ENCODE measurements at regions of chr13 and their contacts with region 1.

Region 1: GRCh38 chr13:32538621-32539246 is at the start of gene N4BP2L2:
- DNase-seq: peak; percentile 94
- ATAC-seq: peak; percentile 96
- H3K4me3 Mint-ChIP-seq: peak within 1 kb of the TSS; percentile 93
- H3K27ac Mint-ChIP-seq: peak within 1 kb of the TSS; percentile 98
- H3K4me1 Mint-ChIP-seq: peaks cover 39% of the 10 kb centered on the region
- H3K27me3 Mint-ChIP-seq: peaks cover 4% of the 10 kb centered on the region
- total RNA-seq, gene N4BP2L2: 95.1 to 105 TPM

Region 2: GRCh38 chr13:31199849-31200636 is 1338.7 kb before region 1 on chr13 and contains the start of gene B3GLCT:
- CTCF ChIA-PET with region 1: no interaction called
- POLR2A ChIA-PET with region 1: no interaction called
- intact Hi-C with region 1: loop called in 1 of 2 experiments (anchors 10 kb)
- DNase-seq: peak; percentile 87
- ATAC-seq: peak; percentile 81
- H3K4me3 Mint-ChIP-seq: peak within 1 kb of the TSS; percentile 71
- H3K27ac Mint-ChIP-seq: peak within 1 kb of the TSS; percentile 58
- H3K4me1 Mint-ChIP-seq: peaks cover 34% of the 10 kb centered on the region
- H3K27me3 Mint-ChIP-seq: no peaks in the 10 kb centered on the region
- total RNA-seq, gene B3GLCT: 2.1 to 2.4 TPM

Region 3: DNA sequence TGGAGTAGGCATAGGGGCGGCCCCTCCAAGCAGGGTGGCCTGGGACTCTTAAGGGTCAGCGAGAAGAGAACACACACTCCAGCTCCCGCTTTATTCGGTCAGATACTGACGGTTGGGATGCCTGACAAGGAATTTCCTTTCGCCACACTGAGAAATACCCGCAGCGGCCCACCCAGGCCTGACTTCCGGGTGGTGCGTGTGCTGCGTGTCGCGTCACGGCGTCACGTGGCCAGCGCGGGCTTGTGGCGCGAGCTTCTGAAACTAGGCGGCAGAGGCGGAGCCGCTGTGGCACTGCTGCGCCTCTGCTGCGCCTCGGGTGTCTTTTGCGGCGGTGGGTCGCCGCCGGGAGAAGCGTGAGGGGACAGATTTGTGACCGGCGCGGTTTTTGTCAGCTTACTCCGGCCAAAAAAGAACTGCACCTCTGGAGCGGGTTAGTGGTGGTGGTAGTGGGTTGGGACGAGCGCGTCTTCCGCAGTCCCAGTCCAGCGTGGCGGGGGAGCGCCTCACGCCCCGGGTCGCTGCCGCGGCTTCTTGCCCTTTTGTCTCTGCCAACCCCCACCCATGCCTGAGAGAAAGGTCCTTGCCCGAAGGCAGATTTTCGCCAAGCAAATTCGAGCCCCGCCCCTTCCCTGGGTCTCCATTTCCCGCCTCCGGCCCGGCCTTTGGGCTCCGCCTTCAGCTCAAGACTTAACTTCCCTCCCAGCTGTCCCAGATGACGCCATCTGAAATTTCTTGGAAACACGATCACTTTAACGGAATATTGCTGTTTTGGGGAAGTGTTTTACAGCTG is 223.3 kb before region 1 on chr13 and contains the starts of genes BRCA2 and ZAR1L:
- CTCF ChIA-PET with region 1: no interaction called
- POLR2A ChIA-PET with region 1: interaction called, 5 read pairs
- intact Hi-C with region 1: loop called (anchors 1 to 2 kb)
- DNase-seq: peak; percentile 94
- ATAC-seq: peak; percentile 95
- H3K4me3 Mint-ChIP-seq: peak within 1 kb of the TSS; percentile 92
- H3K27ac Mint-ChIP-seq: peak within 1 kb of the TSS; percentile 100
- H3K4me1 Mint-ChIP-seq: peaks cover 9% of the 10 kb centered on the region
- H3K27me3 Mint-ChIP-seq: no peaks in the 10 kb centered on the region
- total RNA-seq, gene BRCA2: 34.1 to 49.0 TPM
- total RNA-seq, gene ZAR1L: not detected

Region 4: DNA sequence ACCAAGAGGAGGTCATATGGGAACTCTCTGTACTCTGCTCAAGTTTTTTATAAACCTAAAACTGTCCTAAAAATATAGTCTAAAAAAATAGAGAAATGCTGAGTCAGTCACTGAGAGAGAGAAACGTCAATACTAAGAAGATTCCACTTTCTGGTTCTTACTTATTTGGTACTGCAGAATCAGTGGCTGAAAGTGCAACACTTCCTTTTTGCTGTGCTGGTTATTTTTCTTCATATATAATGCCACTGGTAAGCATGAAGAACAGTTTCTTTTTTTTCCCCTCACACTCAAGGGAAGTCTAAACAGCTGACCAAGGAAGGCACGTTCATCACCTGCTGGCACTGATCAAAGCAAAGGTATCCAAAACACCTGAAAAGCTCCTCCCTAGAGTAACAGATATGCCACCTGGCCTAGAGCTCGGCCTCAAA is 66.5 kb before region 1 on chr13:
- CTCF ChIA-PET with region 1: no interaction called
- POLR2A ChIA-PET with region 1: interaction called, 5 read pairs
- intact Hi-C with region 1: loop called in 1 of 2 experiments (anchors 5 kb)
- DNase-seq: no peak
- ATAC-seq: peak; percentile 70
- H3K4me3 Mint-ChIP-seq: no peak overlapping the region
- H3K27ac Mint-ChIP-seq: no peak overlapping the region
- H3K4me1 Mint-ChIP-seq: peaks cover 8% of the 10 kb centered on the region
- H3K27me3 Mint-ChIP-seq: no peaks in the 10 kb centered on the region

Region 5: GRCh38 chr13:32639502-32640105 is 100.9 kb after region 1 on chr13:
- CTCF ChIA-PET with region 1: no interaction called
- POLR2A ChIA-PET with region 1: no interaction called
- intact Hi-C with region 1: loop called in 1 of 2 experiments (anchors 2 kb)
- DNase-seq: peak; percentile 66
- ATAC-seq: peak; percentile 69
- H3K4me3 Mint-ChIP-seq: no peak overlapping the region
- H3K27ac Mint-ChIP-seq: no peak overlapping the region
- H3K4me1 Mint-ChIP-seq: peaks cover 40% of the 10 kb centered on the region
- H3K27me3 Mint-ChIP-seq: no peaks in the 10 kb centered on the region

Region 6: DNA sequence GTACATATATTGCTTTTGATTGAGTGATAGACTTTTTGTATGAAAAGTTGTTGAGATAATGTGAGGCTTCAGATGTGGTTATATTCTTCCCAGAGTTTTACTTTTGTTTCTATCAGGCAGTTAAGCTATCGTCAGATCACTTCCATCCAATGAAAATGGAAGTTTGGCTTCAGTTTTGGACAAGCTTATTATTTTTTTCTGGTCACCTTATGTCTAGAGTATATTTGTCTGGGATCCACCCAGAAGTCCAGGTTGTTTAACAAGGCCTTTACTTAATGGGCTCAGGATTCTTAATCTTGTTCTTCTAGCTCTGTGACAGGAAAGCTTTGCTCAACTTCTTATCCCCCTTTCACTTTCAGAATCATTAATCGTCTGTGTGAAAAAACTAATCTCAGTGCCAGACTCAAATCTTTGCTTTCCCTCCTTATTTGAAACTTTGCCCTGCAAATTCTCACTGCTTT is 198.4 kb after region 1 on chr13:
- CTCF ChIA-PET with region 1: no interaction called
- POLR2A ChIA-PET with region 1: no interaction called
- intact Hi-C with region 1: loop called in 1 of 2 experiments (anchors 5 kb)
- DNase-seq: no peak
- ATAC-seq: peak; percentile 73
- H3K4me3 Mint-ChIP-seq: peak overlapping the region; percentile 69
- H3K27ac Mint-ChIP-seq: peak overlapping the region; percentile 92
- H3K4me1 Mint-ChIP-seq: peaks cover 27% of the 10 kb centered on the region
- H3K27me3 Mint-ChIP-seq: no peaks in the 10 kb centered on the region

Region 7: DNA sequence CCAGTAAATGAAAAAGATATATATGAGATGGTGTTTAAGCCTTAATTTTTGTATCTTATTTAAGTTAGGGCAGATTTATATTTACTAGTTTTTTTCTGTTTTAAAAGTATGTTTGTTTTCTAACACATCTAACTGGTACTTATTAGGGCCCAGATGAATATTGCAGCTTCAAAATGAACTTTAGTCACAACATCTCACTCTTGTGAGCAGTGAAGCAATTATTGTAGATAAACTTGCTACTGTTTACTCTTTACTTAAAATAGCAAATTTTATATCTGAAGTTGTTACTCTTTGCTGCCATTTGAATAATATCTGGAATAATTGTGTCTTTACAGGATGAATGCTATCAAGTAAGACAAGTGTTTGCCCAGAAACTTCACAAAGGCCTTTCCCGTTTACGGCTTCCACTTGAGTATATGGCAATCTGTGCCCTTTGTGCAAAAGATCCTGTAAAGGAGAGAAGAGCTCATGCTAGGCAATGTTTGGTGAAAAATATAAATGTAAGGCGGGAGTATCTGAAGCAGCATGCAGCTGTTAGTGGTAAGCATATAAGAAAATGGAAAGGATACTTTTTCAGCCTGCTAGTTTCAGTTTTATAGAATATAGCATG is 214.4 kb after region 1 on chr13:
- CTCF ChIA-PET with region 1: no interaction called
- POLR2A ChIA-PET with region 1: no interaction called
- intact Hi-C with region 1: no loop called
- DNase-seq: no peak
- ATAC-seq: no peak
- H3K4me3 Mint-ChIP-seq: no peak overlapping the region
- H3K27ac Mint-ChIP-seq: no peak overlapping the region
- H3K4me1 Mint-ChIP-seq: peaks cover 4% of the 10 kb centered on the region
- H3K27me3 Mint-ChIP-seq: no peaks in the 10 kb centered on the region

Region 8: DNA sequence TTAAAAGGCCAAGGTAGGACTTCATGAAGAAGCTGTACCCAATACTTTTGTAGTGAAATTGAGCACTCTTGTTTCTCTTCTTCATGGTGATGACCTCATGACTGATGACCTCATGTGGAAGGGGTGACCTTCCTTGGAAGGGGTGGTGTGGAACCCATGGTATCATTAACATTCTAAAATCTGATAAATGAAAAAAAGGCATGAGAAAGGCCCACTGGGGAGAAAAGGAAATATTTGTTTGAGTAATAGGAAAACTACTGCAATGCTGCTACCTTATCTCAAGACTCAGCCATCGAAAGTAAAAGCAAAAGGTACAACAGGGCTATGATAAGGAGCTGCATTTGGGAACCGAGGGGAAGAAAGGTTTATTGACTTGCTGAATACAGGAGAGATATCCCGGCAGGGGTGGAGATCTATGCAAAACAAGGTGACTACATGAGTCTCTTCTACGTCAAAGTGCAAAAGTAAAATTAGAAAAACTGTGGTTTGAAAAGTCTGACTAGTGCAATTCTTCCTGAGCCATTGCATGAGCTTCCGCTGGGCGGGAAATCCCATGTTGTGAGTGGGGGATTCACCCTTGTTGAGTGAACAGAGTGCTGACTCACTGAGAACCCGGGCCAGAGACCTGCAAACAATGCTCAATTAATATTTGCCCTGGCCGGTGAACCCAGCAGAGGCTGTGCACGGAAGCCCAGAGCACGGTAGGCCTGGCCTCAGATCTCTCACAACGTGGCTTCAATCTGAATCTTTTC is 1140.3 kb after region 1 on chr13:
- CTCF ChIA-PET with region 1: no interaction called
- POLR2A ChIA-PET with region 1: no interaction called
- intact Hi-C with region 1: loop called in 1 of 2 experiments (anchors 5 kb)
- DNase-seq: peak; percentile 91
- ATAC-seq: peak; percentile 90
- H3K4me3 Mint-ChIP-seq: peak overlapping the region; percentile 64
- H3K27ac Mint-ChIP-seq: peak overlapping the region; percentile 89
- H3K4me1 Mint-ChIP-seq: peaks cover 37% of the 10 kb centered on the region
- H3K27me3 Mint-ChIP-seq: no peaks in the 10 kb centered on the region